ENCODE measurements at regions of chr4 and their contacts with region 1.

Region 1: GRCh38 chr4:83284193-83285054 is at the start of gene COQ2:
- DNase-seq: peak; percentile 97 to 99
- ATAC-seq: peak; percentile 95 to 97 (median 96)
- H3K4me3 ChIP-seq: peak within 1 kb of the TSS; percentile 82
- H3K27ac ChIP-seq: peak within 1 kb of the TSS; percentile 99
- H3K4me1 ChIP-seq: peaks cover 23% of the 10 kb centered on the region
- H3K27me3 ChIP-seq: no peaks in the 10 kb centered on the region
- CTCF ChIP-seq: peak; percentile 20
- total RNA-seq, gene COQ2: 11.6 to 29.1 (median 20.3) TPM

Region 2: DNA sequence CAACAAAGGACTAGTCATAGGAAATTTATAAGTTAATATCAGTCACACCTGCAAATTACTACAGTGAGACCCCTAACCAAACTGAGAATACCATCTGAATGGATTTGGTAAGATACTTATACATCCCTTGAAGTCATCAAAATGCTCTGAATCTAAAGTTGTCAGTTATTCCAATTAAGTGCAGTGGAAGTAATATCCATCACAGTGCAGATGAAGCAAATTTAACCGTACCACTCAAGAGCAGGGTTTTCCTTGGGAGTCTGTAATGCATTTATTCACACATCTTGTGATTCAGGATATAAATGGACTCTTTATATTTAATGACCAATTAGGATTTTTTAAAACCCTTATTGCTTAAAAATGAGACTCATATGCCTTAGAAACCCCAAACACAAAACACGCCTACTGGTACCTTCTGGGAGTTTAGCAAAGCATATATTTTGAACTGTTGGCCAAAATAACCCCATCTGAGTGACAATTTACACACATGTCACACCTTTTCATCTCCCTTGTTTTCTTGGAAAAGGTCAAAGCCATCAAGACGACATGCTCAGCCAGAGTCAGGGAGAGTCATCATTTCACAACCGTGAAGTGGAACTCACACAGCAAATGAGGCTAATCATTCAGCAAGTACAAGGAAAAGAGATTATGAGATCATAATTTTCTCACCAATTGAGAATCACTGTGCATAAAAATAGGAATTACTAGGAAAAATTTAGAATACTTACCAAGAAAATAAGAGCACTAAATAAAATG is 1214.4 kb before region 1 on chr4:
- intact Hi-C with region 1: no loop called
- DNase-seq: no peak
- ATAC-seq: no peak
- H3K4me3 ChIP-seq: no peak overlapping the region
- H3K27ac ChIP-seq: no peak overlapping the region
- H3K4me1 ChIP-seq: no peaks in the 10 kb centered on the region
- H3K27me3 ChIP-seq: no peaks in the 10 kb centered on the region
- CTCF ChIP-seq: no peak

Region 3: GRCh38 chr4:82900331-82901128 is 383.9 kb before region 1 on chr4 and contains the start of gene THAP9:
- intact Hi-C with region 1: loop called in 1 of 2 experiments (anchors 5 kb)
- DNase-seq: peak; percentile 98 to 99
- ATAC-seq: peak; percentile 96 to 98 (median 97)
- H3K4me3 ChIP-seq: peak within 1 kb of the TSS; percentile 76
- H3K27ac ChIP-seq: peak within 1 kb of the TSS; percentile 96
- H3K4me1 ChIP-seq: peaks cover 37% of the 10 kb centered on the region
- H3K27me3 ChIP-seq: no peaks in the 10 kb centered on the region
- CTCF ChIP-seq: no peak
- total RNA-seq, gene THAP9: 7.3 to 10.2 (median 7.8) TPM

Region 4: DNA sequence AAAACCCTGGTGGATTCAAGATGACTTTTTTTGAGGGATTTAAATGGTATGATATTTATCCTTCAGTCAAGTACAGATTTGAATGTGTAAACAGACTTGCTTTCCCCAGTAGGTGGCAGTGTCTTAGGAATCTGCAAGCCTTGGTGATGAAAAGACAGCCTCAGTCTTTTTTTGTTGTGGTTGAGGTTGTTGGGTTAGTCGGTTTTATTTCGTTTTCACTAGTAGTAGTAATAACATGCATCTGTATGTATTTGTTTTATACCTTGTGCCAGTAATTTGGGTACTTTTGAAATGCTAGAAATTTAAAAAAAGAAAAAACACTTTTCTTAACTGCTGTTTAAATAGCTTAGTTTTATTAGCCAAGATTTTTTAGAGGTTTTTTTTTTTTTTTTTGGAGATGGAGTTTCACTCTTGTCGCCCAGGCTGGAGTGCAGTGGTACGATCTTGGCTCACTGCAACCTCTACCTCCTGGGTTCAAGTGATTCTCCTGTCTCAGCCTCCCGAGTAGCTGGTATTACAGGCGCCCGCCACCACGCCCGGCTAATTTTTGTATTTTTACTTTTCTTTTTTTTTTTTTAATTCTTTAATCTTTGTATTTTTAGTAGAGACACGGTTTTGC is 210.2 kb before region 1 on chr4:
- intact Hi-C with region 1: loop called in 1 of 2 experiments (anchors 5 kb)
- DNase-seq: no peak
- ATAC-seq: peak; percentile 45 to 64 (median 59)
- H3K4me3 ChIP-seq: no peak overlapping the region
- H3K27ac ChIP-seq: no peak overlapping the region
- H3K4me1 ChIP-seq: peaks cover 11% of the 10 kb centered on the region
- H3K27me3 ChIP-seq: no peaks in the 10 kb centered on the region
- CTCF ChIP-seq: peak; percentile 66

Region 5: GRCh38 chr4:83174844-83175414 is 109.5 kb before region 1 on chr4:
- intact Hi-C with region 1: no loop called
- DNase-seq: no peak
- ATAC-seq: no peak
- H3K4me3 ChIP-seq: no peak overlapping the region
- H3K27ac ChIP-seq: no peak overlapping the region
- H3K4me1 ChIP-seq: no peaks in the 10 kb centered on the region
- H3K27me3 ChIP-seq: no peaks in the 10 kb centered on the region
- CTCF ChIP-seq: no peak

Region 6: GRCh38 chr4:83240379-83240875 is 44.0 kb before region 1 on chr4:
- intact Hi-C with region 1: no loop called
- DNase-seq: no peak
- ATAC-seq: no peak
- H3K4me3 ChIP-seq: no peak overlapping the region
- H3K27ac ChIP-seq: no peak overlapping the region
- H3K4me1 ChIP-seq: no peaks in the 10 kb centered on the region
- H3K27me3 ChIP-seq: no peaks in the 10 kb centered on the region
- CTCF ChIP-seq: no peak

Region 7: DNA sequence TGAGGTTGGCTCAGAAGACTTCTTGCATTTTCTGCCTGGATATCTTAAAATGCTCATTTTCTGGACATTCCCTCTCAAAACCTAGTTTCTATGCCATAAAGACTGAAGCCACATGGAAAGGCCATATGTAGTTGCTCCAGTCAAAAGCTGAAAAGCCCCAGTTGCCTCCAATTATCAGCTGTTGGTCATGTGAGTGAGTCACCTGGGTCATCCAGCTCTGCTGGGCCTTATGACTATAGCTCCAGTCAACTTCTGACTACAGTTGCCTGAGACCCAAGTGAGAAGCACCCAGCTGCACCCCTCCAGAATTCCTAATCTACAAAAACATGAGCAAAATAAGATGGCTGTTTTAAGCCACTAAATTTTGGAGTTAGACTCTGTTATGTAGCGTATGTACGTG is 129.3 kb after region 1 on chr4:
- intact Hi-C with region 1: no loop called
- DNase-seq: no peak
- ATAC-seq: no peak
- H3K4me3 ChIP-seq: no peak overlapping the region
- H3K27ac ChIP-seq: no peak overlapping the region
- H3K4me1 ChIP-seq: no peaks in the 10 kb centered on the region
- H3K27me3 ChIP-seq: no peaks in the 10 kb centered on the region
- CTCF ChIP-seq: no peak

Region 8: GRCh38 chr4:83455281-83456129 is 171.1 kb after region 1 on chr4 and contains the starts of genes HELQ and MRPS18C:
- intact Hi-C with region 1: loop called in 1 of 2 experiments (anchors 2 kb)
- DNase-seq: peak; percentile 95 to 97
- ATAC-seq: peak; percentile 99
- H3K4me3 ChIP-seq: peak within 1 kb of the TSS; percentile 83
- H3K27ac ChIP-seq: peak within 1 kb of the TSS; percentile 96
- H3K4me1 ChIP-seq: peaks cover 16% of the 10 kb centered on the region
- H3K27me3 ChIP-seq: no peaks in the 10 kb centered on the region
- CTCF ChIP-seq: peak; percentile 21
- total RNA-seq, gene HELQ: 14.1 to 19.1 (median 17.3) TPM
- total RNA-seq, gene MRPS18C: 38.2 to 60.1 (median 46.1) TPM

Measured in psoas muscle (tissue), 8 donors.